ENCODE measurements at regions of chr19 and their contacts with region 1.

Region 1: GRCh38 chr19:57406516-57407123 is 4.3 kb upstream of the ZNF17 start:
- DNase-seq: peak; percentile 65
- ATAC-seq: peak; percentile 80
- H3K4me3 ChIP-seq: no peak overlapping the region; a peak in 1 of 6 replicates
- H3K27ac ChIP-seq: no peak overlapping the region
- H3K4me1 ChIP-seq: peaks cover 41% of the 10 kb centered on the region
- H3K27me3 ChIP-seq: no peaks in the 10 kb centered on the region
- CTCF ChIP-seq: peak; percentile 96
- EP300 ChIP-seq: no peak
- POLR2A ChIP-seq: no peak
- RAD21 ChIP-seq: peak; percentile 85

Region 2: DNA sequence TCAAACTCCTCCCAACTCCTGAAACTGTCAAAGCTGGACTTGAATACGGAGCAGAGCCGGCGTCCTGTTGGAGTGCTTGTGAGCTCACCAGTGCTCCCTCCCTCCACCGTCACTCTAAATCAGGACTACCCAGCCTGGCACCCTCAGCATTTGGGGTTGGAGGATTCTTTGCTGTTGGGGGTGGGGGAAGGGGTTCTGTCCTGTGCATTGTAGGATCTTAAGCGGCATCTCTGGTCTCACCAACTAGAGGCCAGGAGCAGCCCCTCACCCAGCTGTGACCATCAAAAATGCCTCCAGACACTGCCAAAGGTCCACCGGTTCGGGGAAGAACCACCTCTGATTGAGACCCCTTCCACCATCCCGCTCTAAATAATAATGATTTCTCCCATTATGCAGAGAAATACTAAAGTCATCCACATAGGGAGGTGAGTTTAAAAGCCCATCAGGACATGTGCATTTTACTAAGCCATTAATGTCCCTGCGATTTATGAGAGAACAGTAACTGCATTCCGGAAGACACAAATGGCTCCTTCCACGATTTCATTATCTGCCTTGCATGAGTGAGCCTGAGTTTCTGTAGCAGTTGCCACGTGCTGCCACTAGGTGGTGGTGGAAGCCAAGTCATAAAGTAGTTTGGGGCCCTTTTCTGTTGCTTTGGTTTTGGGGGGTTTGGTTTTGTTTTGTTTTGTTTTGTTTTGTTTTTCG is 302.9 kb before region 1 on chr19:
- CTCF ChIA-PET with region 1: no interaction called
- POLR2A ChIA-PET with region 1: no interaction called
- in situ Hi-C with region 1: no loop called
- intact Hi-C with region 1: loop called (anchors 10 kb)
- DNase-seq: peak; percentile 47
- ATAC-seq: peak; percentile 66
- H3K4me3 ChIP-seq: peak overlapping the region; percentile 9 to 60 (median 18); a peak in 4 of 6 replicates
- H3K27ac ChIP-seq: no peak overlapping the region
- H3K4me1 ChIP-seq: peaks cover 15% of the 10 kb centered on the region; the same call in 1 of the 2 replicates
- H3K27me3 ChIP-seq: no peaks in the 10 kb centered on the region
- CTCF ChIP-seq: peak; percentile 90
- EP300 ChIP-seq: no peak
- POLR2A ChIP-seq: no peak
- RAD21 ChIP-seq: peak; percentile 77

Region 3: GRCh38 chr19:57435062-57435978 is 28.7 kb after region 1 on chr19 and contains the start of gene ZNF749:
- CTCF ChIA-PET with region 1: no interaction called
- POLR2A ChIA-PET with region 1: no interaction called
- in situ Hi-C with region 1: no loop called
- intact Hi-C with region 1: loop called (anchors 2 kb)
- DNase-seq: peak; percentile 98
- ATAC-seq: peak; percentile 96
- H3K4me3 ChIP-seq: peak within 1 kb of the TSS; percentile 83 to 98 (median 88)
- H3K27ac ChIP-seq: peak within 1 kb of the TSS; percentile 75
- H3K4me1 ChIP-seq: peaks cover 22% of the 10 kb centered on the region
- H3K27me3 ChIP-seq: no peaks in the 10 kb centered on the region; a peak in 1 of 5 replicates
- CTCF ChIP-seq: no peak
- EP300 ChIP-seq: peak; percentile 6 to 55; a peak in 1 of 4 replicates
- POLR2A ChIP-seq: peak; percentile 73 to 85
- RAD21 ChIP-seq: 0 out of 2 replicates have a peak, but pooled peaks have one; percentile 15
- total RNA-seq, gene ZNF749: 19.1 and 21.0 TPM in 2 replicates

Region 4: DNA sequence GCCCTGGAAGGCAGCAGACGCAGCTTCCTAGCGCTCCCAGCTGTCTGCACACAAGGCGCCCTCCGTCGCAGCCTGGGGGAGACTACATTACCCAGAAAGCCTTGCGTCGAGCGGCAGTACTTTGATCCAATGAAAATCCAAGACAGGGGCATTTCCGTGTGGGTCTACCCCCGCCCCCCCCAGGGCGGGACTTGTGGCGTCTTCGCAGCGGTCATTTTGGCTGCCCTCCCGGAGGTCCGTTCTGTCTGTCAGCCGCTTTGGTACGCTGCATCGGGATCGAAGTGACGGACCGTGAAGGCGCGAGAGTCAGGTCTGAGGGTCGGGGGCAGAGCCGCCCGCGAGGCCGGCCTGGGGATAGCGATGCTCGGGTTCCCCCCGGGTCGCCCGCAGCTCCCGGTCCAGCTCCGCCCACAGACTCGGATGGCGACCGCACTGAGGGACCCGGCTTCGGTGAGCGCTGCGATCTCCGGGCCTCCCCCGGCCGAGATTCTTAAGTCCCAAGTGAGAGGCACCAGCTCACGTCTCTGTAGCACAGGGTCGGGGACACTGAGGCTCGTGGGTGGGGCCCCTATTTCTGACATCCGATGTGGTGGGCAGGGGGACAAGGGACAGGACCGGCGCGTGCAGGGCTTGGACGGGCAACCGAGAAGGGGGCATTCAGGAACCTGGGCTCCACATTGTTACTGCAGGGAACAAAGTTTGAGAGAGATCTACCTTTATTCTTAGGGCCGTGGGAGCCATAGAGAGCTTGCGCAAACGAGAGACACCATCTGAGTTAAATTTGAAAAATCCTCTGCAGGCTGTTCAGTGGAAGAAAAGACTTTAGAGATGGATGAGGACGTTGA is 226.6 kb after region 1 on chr19 and contains the start of gene ZNF211:
- CTCF ChIA-PET with region 1: no interaction called
- POLR2A ChIA-PET with region 1: no interaction called
- in situ Hi-C with region 1: no loop called
- intact Hi-C with region 1: loop called (anchors 1 kb)
- DNase-seq: peak; percentile 92
- ATAC-seq: peak; percentile 98
- H3K4me3 ChIP-seq: peak within 1 kb of the TSS; percentile 87 to 96 (median 89)
- H3K27ac ChIP-seq: peak within 1 kb of the TSS; percentile 34
- H3K4me1 ChIP-seq: peaks cover 12% of the 10 kb centered on the region
- H3K27me3 ChIP-seq: no peaks in the 10 kb centered on the region; a peak in 1 of 5 replicates
- CTCF ChIP-seq: peak; percentile 40; the same call in 1 of the 2 replicates
- EP300 ChIP-seq: no peak
- POLR2A ChIP-seq: peak; percentile 31 to 74; a peak in 2 of 4 replicates
- RAD21 ChIP-seq: no peak
- total RNA-seq, gene ZNF211: 11.2 and 12.2 TPM in 2 replicates

Measured in HepG2 (cell line).